ENCODE measurements at regions of chrX and their contacts with region 1.

Region 1: DNA sequence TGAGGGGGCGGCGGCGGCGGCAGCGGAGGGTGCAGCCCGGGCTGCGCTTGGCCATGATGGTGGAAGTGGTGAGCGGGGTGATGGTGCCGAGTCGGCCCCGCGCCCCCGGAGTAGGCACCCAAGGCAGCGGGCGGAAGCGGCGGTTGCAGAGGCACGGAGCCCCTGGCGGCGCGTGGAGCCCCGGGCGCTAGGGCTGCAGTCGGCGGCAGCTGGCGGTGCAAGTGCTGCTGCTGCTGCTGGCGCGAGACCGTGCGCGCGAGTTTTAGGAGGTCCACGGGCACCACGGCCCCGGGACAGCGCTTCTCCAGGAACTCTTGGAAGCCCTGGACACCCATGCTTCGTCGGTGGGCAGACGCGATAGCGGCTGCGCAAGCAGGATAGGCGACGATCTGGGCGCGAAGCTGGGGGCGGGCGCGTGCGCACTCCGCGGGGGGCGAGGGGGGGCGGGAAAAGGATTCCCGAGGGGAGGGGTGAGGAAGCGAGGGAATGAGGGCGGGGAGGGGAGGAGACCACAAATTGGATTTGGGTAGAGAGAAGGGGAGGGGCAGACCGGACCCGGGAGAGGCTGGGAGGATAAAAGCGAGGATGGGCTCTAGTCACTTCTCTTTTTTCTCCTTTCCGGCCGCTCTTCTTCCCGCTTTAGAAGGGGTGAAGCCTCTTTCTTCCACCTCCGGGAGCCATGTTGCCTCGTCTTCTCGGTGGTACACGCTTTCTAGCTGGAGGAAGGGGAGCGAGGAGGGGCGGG is at the start of gene FAM120C:
- DNase-seq: peak; percentile 62 to 66 (median 65)
- H3K4me3 ChIP-seq: peak within 1 kb of the TSS; percentile 20 to 63
- H3K4me3 Mint-ChIP-seq: peak within 1 kb of the TSS; percentile 84 to 92 (median 86)
- H3K27ac ChIP-seq: peak within 1 kb of the TSS; percentile 72
- H3K27ac Mint-ChIP-seq: peak within 1 kb of the TSS; percentile 74 to 92 (median 89)
- H3K4me1 ChIP-seq: peaks cover 29% of the 10 kb centered on the region
- H3K4me1 Mint-ChIP-seq: peaks cover 31 to 47% (median 39%) of the 10 kb centered on the region in 4 donors
- H3K27me3 ChIP-seq: no peaks in the 10 kb centered on the region
- H3K27me3 Mint-ChIP-seq: no peaks in the 10 kb centered on the region
- total RNA-seq, gene FAM120C: 17.6 to 21.1 TPM

Region 2: DNA sequence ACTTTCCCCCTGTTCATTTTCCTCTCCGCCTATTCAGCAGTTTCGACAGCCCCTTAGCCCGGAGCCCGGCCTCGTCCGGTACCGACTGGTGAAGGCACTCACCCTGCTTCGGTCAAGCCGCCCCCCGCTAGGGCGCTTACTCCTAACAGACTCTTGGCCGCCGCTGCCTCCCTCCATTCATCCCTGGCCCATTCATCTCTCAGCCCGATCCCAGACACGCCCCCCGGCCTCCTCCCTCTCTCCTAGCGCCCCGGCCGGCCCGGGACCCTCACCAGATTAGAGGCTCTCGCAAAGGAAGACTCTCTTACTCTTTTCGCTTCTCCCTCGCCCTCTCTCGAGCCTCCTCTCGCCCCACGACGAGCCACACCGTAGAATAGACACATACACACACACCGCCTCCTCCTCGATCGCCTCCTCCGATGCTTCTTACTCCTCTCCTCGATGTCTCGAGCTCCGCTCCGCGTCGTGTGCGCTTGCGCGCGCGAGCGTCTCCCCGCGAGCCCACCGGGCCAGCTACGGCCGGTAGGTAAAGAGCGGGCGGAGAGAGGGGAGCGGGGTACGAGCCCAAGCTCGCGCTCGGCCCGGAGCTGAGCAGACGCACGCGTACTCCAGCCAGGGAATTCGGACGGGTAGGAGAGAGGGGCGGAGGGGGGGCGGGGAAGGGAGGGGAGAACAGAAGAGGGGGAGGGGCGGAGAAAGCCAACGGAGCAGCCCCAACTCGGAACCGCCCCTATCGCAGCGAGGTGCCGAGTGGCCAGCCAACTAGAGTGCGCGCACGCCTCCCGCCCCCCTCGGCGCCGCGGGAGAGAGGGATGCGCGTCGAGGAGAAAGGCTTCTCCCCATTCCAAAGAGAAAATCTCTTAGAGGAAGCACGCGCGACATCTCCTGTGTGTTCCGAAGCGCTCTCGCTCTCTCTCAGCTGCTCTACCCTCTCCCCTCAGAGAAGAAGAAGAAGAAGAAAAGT is 174.7 kb after region 1 on chrX and contains the start of gene WNK3:
- CTCF ChIA-PET with region 1: no interaction called
- POLR2A ChIA-PET with region 1: no interaction called
- intact Hi-C with region 1: loop called (anchors 5 kb)
- DNase-seq: peak; percentile 23 to 36 (median 25)
- H3K4me3 ChIP-seq: peak within 1 kb of the TSS in 1 of 2 donors; percentile 28
- H3K4me3 Mint-ChIP-seq: peak within 1 kb of the TSS; percentile 70 to 89 (median 86)
- H3K27ac ChIP-seq: no peak within 1 kb of the TSS
- H3K27ac Mint-ChIP-seq: peak within 1 kb of the TSS in 6 of 7 donors; percentile 11 to 82 (median 48)
- H3K4me1 ChIP-seq: peaks cover 5% of the 10 kb centered on the region
- H3K4me1 Mint-ChIP-seq: peaks cover 6 to 16% (median 12%) of the 10 kb centered on the region in 4 donors
- H3K27me3 ChIP-seq: no peaks in the 10 kb centered on the region
- H3K27me3 Mint-ChIP-seq: peaks cover 7 to 19% of the 10 kb centered on the region in 2 donors
- total RNA-seq, gene WNK3: 0.64 to 0.81 TPM

Region 3: GRCh38 chrX:54439967-54440871 is 257.2 kb after region 1 on chrX and contains the start of gene TSR2:
- CTCF ChIA-PET with region 1: no interaction called
- POLR2A ChIA-PET with region 1: interaction called, 11 read pairs
- intact Hi-C with region 1: loop called (anchors 1 kb)
- DNase-seq: peak; percentile 76 to 88 (median 80)
- H3K4me3 ChIP-seq: peak within 1 kb of the TSS; percentile 69 to 81
- H3K4me3 Mint-ChIP-seq: peak within 1 kb of the TSS; percentile 86 to 97 (median 93)
- H3K27ac ChIP-seq: peak within 1 kb of the TSS; percentile 75
- H3K27ac Mint-ChIP-seq: peak within 1 kb of the TSS; percentile 84 to 92 (median 90)
- H3K4me1 ChIP-seq: peaks cover 26% of the 10 kb centered on the region
- H3K4me1 Mint-ChIP-seq: peaks cover 15 to 35% (median 25%) of the 10 kb centered on the region in 4 donors
- H3K27me3 ChIP-seq: no peaks in the 10 kb centered on the region
- H3K27me3 Mint-ChIP-seq: no peaks in the 10 kb centered on the region
- total RNA-seq, gene TSR2: 39.2 to 42.1 TPM

Region 4: GRCh38 chrX:54529552-54530357 is 346.7 kb after region 1 on chrX and contains the start of gene GNL3L:
- CTCF ChIA-PET with region 1: no interaction called
- POLR2A ChIA-PET with region 1: interaction called, 14 read pairs
- intact Hi-C with region 1: no loop called
- DNase-seq: peak; percentile 79 to 84 (median 82)
- H3K4me3 ChIP-seq: peak within 1 kb of the TSS; percentile 88 to 97
- H3K4me3 Mint-ChIP-seq: peak within 1 kb of the TSS; percentile 91 to 99 (median 95)
- H3K27ac ChIP-seq: peak within 1 kb of the TSS; percentile 73
- H3K27ac Mint-ChIP-seq: peak within 1 kb of the TSS; percentile 91 to 98 (median 96)
- H3K4me1 ChIP-seq: peaks cover 34% of the 10 kb centered on the region
- H3K4me1 Mint-ChIP-seq: peaks cover 19 to 45% (median 30%) of the 10 kb centered on the region in 4 donors
- H3K27me3 ChIP-seq: no peaks in the 10 kb centered on the region
- H3K27me3 Mint-ChIP-seq: no peaks in the 10 kb centered on the region
- total RNA-seq, gene GNL3L: 41.7 to 45.1 TPM

Region 5: GRCh38 chrX:55379396-55379795 is 1196.4 kb after region 1 on chrX:
- CTCF ChIA-PET with region 1: no interaction called
- POLR2A ChIA-PET with region 1: no interaction called
- intact Hi-C with region 1: no loop called
- DNase-seq: no peak
- H3K4me3 ChIP-seq: no peak overlapping the region
- H3K4me3 Mint-ChIP-seq: no peak overlapping the region
- H3K27ac ChIP-seq: no peak overlapping the region
- H3K27ac Mint-ChIP-seq: no peak overlapping the region
- H3K4me1 ChIP-seq: no peaks in the 10 kb centered on the region
- H3K4me1 Mint-ChIP-seq: no peaks in the 10 kb centered on the region
- H3K27me3 ChIP-seq: no peaks in the 10 kb centered on the region
- H3K27me3 Mint-ChIP-seq: peaks cover 1 to 8% of the 10 kb centered on the region in 2 donors